ENCODE measurements at regions of chr15 and their contacts with region 1.

Region 1: DNA sequence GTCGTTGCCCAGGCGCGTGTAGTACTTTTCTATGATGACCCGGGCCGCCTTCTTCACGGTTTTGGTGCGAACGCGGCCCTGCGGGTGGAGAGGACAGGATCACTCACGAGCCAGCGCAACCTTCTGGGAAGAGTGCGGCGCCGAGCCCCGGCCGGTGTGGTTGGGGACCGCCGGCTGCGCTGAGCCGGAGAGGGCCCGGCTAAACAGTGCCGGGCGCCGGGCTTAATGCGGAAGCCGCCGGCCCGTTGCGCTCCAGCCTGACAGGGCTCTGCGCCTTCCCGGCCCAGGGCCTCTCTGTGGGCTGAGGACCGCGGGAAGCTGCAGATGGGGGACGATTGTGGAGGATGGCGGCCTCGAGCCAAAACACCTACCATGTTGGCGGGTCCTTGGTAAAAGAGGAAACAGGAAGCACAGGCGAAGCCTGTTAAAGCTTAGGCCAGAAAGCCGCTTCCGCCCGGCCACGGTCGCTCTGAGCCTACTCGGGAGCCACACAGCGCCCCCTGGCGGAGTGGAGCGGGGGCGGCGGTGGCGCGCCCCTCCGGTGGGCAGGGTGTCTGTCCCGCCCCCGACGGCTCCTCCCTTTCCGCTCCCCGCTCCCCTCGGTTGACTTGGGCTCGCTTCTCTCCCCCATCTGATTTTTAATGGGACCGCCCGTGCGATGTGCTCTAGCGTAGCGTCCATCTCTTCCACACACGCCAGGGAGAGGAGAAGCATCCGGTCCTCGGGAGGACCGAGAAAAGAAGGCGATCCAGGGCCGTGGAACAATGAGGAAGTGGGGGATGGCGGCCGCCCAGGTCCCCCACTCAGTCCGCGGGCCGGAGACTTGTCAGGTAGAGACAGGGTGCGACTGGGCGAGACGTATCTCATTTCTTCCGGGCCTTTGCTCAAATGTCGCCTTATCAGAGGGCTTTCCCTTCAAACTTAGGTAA is at the start of gene RPS17:
- DNase-seq: peak; percentile 96 to 98
- ATAC-seq: peak; percentile 97 to 99 (median 98)
- H3K4me3 ChIP-seq: peak within 1 kb of the TSS; percentile 65 to 98 (median 88)
- H3K27ac ChIP-seq: peak within 1 kb of the TSS; percentile 51 to 96 (median 90)
- H3K4me1 ChIP-seq: peaks cover 2 to 47% (median 41%) of the 10 kb centered on the region in 9 donors
- H3K27me3 ChIP-seq: peaks cover 0 to 4% (median 0%) of the 10 kb centered on the region in 7 donors
- CTCF ChIP-seq: peak; percentile 98 to 100 (median 100)
- total RNA-seq, gene RPS17: 675 to 1,048 (median 736) TPM

Region 2: GRCh38 chr15:82809404-82810060 is 269.2 kb after region 1 on chr15 and contains the start of gene WHAMM:
- intact Hi-C with region 1: loop called in 1 of 10 experiments (anchors 5 kb)
- DNase-seq: peak; percentile 98 to 99
- ATAC-seq: peak; percentile 94 to 98 (median 96)
- H3K4me3 ChIP-seq: peak within 1 kb of the TSS; percentile 65 to 96 (median 89)
- H3K27ac ChIP-seq: peak within 1 kb of the TSS; percentile 91 to 100 (median 99)
- H3K4me1 ChIP-seq: peaks cover 11 to 49% (median 33%) of the 10 kb centered on the region in 9 donors
- H3K27me3 ChIP-seq: no peaks in the 10 kb centered on the region
- CTCF ChIP-seq: peak in 1 of 9 donors; percentile 42
- total RNA-seq, gene WHAMM: 5.4 to 8.1 (median 6.8) TPM

Measured in heart right ventricle (tissue), 16 donors.